ENCODE measurements at regions of chr9 and their contacts with region 1.

Region 1: GRCh38 chr9:72280913-72281500 is 84.0 kb downstream of the ZFAND5 start:
- DNase-seq: peak; percentile 65 to 76
- H3K4me3 ChIP-seq: no peak overlapping the region
- H3K27ac ChIP-seq: no peak overlapping the region
- H3K4me1 ChIP-seq: no peaks in the 10 kb centered on the region
- H3K27me3 ChIP-seq: no peaks in the 10 kb centered on the region
- CTCF ChIP-seq: peak; percentile 84 to 94 (median 93)
- EP300 ChIP-seq: no peak
- POLR2A ChIP-seq: no peak
- RAD21 ChIP-seq: peak; percentile 98 to 99

Region 2: GRCh38 chr9:72119853-72120252 is 161.2 kb before region 1 on chr9:
- CTCF ChIA-PET with region 1: no interaction called
- POLR2A ChIA-PET with region 1: no interaction called
- DNase-seq: no peak
- H3K4me3 ChIP-seq: no peak overlapping the region
- H3K27ac ChIP-seq: no peak overlapping the region
- H3K4me1 ChIP-seq: no peaks in the 10 kb centered on the region
- H3K27me3 ChIP-seq: no peaks in the 10 kb centered on the region
- CTCF ChIP-seq: no peak
- EP300 ChIP-seq: no peak
- POLR2A ChIP-seq: no peak
- RAD21 ChIP-seq: no peak

Region 3: DNA sequence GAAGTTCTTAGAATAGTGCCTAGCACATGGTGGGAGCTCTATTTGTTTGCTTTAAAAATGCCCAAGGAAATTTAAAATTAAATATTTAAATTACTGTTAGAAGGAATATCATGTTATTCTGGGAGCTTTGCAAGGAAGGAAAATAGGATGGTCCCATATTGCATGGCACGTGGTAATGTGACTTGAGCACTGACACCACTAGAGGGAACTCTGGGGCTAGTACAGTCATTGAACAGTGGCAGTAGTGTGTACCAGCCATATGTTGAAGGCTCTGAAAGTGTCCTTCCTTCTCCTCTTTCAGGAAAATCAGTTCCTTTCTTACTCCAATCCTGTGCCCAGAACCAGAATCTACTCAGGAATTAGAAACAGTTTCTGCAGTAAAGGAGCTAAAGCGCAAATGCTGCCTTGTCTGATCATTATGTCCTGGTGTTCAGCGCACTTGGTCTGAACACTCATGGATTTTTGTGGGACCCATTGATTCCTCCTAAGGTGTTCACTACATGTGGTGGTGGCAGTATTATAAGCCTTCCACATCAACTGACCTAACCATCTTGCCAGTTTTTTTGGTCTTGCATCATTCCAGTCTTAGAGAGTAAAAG is 77.7 kb before region 1 on chr9:
- CTCF ChIA-PET with region 1: interaction called, 34 read pairs
- POLR2A ChIA-PET with region 1: no interaction called
- DNase-seq: no peak
- H3K4me3 ChIP-seq: no peak overlapping the region
- H3K27ac ChIP-seq: no peak overlapping the region
- H3K4me1 ChIP-seq: no peaks in the 10 kb centered on the region
- H3K27me3 ChIP-seq: no peaks in the 10 kb centered on the region
- CTCF ChIP-seq: peak; percentile 23 to 77 (median 62)
- EP300 ChIP-seq: no peak
- POLR2A ChIP-seq: no peak
- RAD21 ChIP-seq: peak; percentile 69 to 78

Region 4: GRCh38 chr9:72226146-72226812 is 54.7 kb before region 1 on chr9:
- CTCF ChIA-PET with region 1: no interaction called
- POLR2A ChIA-PET with region 1: no interaction called
- DNase-seq: no peak
- H3K4me3 ChIP-seq: no peak overlapping the region
- H3K27ac ChIP-seq: no peak overlapping the region
- H3K4me1 ChIP-seq: no peaks in the 10 kb centered on the region
- H3K27me3 ChIP-seq: no peaks in the 10 kb centered on the region
- CTCF ChIP-seq: no peak
- EP300 ChIP-seq: no peak
- POLR2A ChIP-seq: no peak
- RAD21 ChIP-seq: no peak

Region 5: GRCh38 chr9:72315510-72316311 is 34.7 kb after region 1 on chr9:
- CTCF ChIA-PET with region 1: interaction called, 10 read pairs
- POLR2A ChIA-PET with region 1: no interaction called
- DNase-seq: no peak
- H3K4me3 ChIP-seq: no peak overlapping the region
- H3K27ac ChIP-seq: no peak overlapping the region
- H3K4me1 ChIP-seq: peaks cover 0 to 8% (median 6%) of the 10 kb centered on the region in 4 experiments; a peak in 5 of 7 replicates
- H3K27me3 ChIP-seq: no peaks in the 10 kb centered on the region
- CTCF ChIP-seq: no peak
- EP300 ChIP-seq: no peak
- POLR2A ChIP-seq: no peak
- RAD21 ChIP-seq: no peak

Region 6: GRCh38 chr9:72383978-72384709 is 103.1 kb after region 1 on chr9:
- CTCF ChIA-PET with region 1: no interaction called
- POLR2A ChIA-PET with region 1: no interaction called
- DNase-seq: no peak
- H3K4me3 ChIP-seq: no peak overlapping the region
- H3K27ac ChIP-seq: no peak overlapping the region
- H3K4me1 ChIP-seq: no peaks in the 10 kb centered on the region; a peak in 1 of 7 replicates
- H3K27me3 ChIP-seq: no peaks in the 10 kb centered on the region
- CTCF ChIP-seq: no peak
- EP300 ChIP-seq: no peak
- POLR2A ChIP-seq: no peak
- RAD21 ChIP-seq: no peak

Region 7: DNA sequence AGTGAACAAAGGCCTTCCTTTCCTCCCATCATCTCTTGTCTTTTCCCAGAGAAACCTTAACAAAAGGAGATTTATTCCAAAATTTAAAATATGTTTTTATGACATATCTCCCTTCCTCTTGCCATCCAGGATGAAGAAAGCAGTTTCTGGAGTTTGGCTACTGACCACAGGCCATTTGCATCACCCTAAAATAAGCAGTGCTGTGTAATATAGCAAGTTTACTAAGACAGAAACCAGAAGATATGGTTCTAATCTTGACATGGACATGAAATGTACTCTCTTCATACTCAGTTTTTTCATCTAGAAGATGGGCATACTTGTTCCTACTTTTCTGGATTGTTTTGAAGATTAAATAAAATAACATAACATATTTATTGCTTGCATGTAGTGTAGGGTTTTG is 134.2 kb after region 1 on chr9:
- CTCF ChIA-PET with region 1: no interaction called
- POLR2A ChIA-PET with region 1: no interaction called
- DNase-seq: no peak
- H3K4me3 ChIP-seq: no peak overlapping the region
- H3K27ac ChIP-seq: no peak overlapping the region
- H3K4me1 ChIP-seq: no peaks in the 10 kb centered on the region
- H3K27me3 ChIP-seq: no peaks in the 10 kb centered on the region
- CTCF ChIP-seq: no peak
- EP300 ChIP-seq: no peak
- POLR2A ChIP-seq: no peak
- RAD21 ChIP-seq: no peak

Region 8: GRCh38 chr9:72592502-72593403 is 311.7 kb after region 1 on chr9:
- CTCF ChIA-PET with region 1: interaction called, 13 read pairs
- POLR2A ChIA-PET with region 1: no interaction called
- DNase-seq: peak in 1 of 2 experiments; percentile 46
- H3K4me3 ChIP-seq: no peak overlapping the region
- H3K27ac ChIP-seq: no peak overlapping the region
- H3K4me1 ChIP-seq: peaks cover 0 to 4% (median 0%) of the 10 kb centered on the region in 4 experiments; a peak in 2 of 7 replicates
- H3K27me3 ChIP-seq: no peaks in the 10 kb centered on the region
- CTCF ChIP-seq: peak in 2 of 3 experiments; percentile 59 to 68; a peak in 3 of 4 replicates
- EP300 ChIP-seq: no peak
- POLR2A ChIP-seq: no peak
- RAD21 ChIP-seq: peak; percentile 82 to 84

Region 9: GRCh38 chr9:73023025-73023541 is 742.1 kb after region 1 on chr9:
- CTCF ChIA-PET with region 1: interaction called, 11 read pairs
- POLR2A ChIA-PET with region 1: no interaction called
- DNase-seq: peak in 1 of 2 experiments; percentile 58
- H3K4me3 ChIP-seq: no peak overlapping the region
- H3K27ac ChIP-seq: no peak overlapping the region
- H3K4me1 ChIP-seq: no peaks in the 10 kb centered on the region
- H3K27me3 ChIP-seq: no peaks in the 10 kb centered on the region
- CTCF ChIP-seq: peak; percentile 54 to 80 (median 70)
- EP300 ChIP-seq: no peak
- POLR2A ChIP-seq: no peak
- RAD21 ChIP-seq: peak; percentile 80 to 84

Measured in H1 (cell line).